Mammary epithelial cell (primary cell): ENCODE measurements at regions of chr7 and their contacts with region 1.

Region 1: GRCh38 chr7:87818336-87818735 is 57.8 kb downstream of the SLC25A40 start:
- DNase-seq: no peak
- H3K4me3 ChIP-seq: no peak overlapping the region
- H3K27ac ChIP-seq: no peak overlapping the region
- H3K4me1 ChIP-seq: no peaks in the 10 kb centered on the region
- H3K27me3 ChIP-seq: no peaks in the 10 kb centered on the region
- CTCF ChIP-seq: no peak

Region 2: DNA sequence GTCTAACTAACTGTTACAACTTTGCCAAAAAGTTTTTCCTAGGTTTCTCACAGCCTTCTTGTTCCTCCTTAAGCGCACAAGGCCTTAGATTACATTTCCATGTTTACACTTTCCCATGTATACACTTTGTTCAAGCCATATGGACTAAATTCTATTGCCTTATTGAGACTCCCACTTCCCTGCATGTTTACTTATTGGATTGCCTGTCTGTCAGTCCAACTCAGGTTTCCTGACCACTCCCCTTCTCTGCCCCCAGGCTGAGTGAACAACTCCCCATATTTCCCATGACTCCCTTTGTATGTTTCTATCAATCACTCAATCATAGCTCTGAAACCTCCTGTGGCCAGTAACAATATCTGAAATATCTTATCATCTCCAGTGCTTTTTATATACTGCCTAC is 14.8 kb after region 1 on chr7:
- CTCF ChIA-PET with region 1: no interaction called
- dilution Hi-C with region 1: no loop called
- in situ Hi-C with region 1: no loop called
- intact Hi-C with region 1: no loop called
- DNase-seq: no peak
- H3K4me3 ChIP-seq: no peak overlapping the region
- H3K27ac ChIP-seq: no peak overlapping the region
- H3K4me1 ChIP-seq: no peaks in the 10 kb centered on the region
- H3K27me3 ChIP-seq: no peaks in the 10 kb centered on the region
- CTCF ChIP-seq: no peak

Region 3: DNA sequence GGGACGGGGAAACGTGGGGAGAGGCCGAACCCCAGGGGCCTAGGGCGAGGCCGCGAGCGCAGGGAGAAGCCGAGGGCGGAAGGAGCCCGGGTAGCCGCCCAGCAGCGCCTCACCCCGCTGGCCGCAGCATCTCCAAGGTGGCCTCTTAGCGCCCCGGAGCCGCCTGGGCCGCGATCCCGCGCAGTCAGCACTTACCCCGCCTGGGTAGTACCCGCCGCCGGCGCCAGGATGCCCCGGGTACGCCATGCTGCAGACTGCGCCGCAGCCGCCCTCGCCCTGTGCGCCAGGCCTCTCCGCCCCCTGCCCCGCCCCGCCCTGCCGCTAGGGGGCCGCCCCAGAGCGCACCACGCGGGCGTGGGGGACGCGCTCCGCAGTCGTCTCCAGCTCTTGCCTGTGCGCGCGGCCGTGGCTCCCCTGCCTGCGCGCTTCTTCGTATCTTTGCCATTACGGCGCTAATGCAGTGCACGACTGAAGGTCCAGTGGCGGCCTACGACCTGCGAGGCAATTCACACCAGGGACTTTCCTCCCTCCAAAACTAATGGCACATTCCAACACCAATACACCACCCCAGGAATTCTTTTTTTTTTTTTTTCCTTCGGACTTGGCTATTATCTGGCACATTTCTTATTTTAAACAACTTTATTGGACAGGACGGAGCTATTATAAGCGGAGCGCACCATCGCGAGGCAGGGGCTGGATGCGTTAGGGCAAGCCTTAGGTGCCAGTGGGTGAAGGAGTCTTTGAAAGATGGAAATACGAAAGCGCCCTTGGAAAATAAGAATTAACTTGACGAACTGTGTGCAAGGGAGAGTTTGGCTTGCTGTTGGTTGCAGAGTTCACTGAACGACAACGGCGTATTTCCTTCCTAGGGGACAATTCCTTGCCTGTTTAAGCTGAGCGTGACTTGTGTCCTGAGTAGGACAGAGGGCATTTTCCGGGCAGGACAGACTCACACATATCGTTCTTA is 401.7 kb after region 1 on chr7 and contains the start of gene SRI:
- CTCF ChIA-PET with region 1: interaction called, 16 read pairs
- dilution Hi-C with region 1: no loop called
- in situ Hi-C with region 1: no loop called
- intact Hi-C with region 1: no loop called
- DNase-seq: peak; percentile 85
- H3K4me3 ChIP-seq: peak within 1 kb of the TSS; percentile 94 to 99 (median 97)
- H3K27ac ChIP-seq: peak within 1 kb of the TSS; percentile 92
- H3K4me1 ChIP-seq: peaks cover 37% of the 10 kb centered on the region
- H3K27me3 ChIP-seq: no peaks in the 10 kb centered on the region
- CTCF ChIP-seq: peak; percentile 25 to 63
- total RNA-seq, gene SRI: 78.0 to 183 TPM